ENCODE measurements at regions of chr18 and their contacts with region 1.

Region 1: DNA sequence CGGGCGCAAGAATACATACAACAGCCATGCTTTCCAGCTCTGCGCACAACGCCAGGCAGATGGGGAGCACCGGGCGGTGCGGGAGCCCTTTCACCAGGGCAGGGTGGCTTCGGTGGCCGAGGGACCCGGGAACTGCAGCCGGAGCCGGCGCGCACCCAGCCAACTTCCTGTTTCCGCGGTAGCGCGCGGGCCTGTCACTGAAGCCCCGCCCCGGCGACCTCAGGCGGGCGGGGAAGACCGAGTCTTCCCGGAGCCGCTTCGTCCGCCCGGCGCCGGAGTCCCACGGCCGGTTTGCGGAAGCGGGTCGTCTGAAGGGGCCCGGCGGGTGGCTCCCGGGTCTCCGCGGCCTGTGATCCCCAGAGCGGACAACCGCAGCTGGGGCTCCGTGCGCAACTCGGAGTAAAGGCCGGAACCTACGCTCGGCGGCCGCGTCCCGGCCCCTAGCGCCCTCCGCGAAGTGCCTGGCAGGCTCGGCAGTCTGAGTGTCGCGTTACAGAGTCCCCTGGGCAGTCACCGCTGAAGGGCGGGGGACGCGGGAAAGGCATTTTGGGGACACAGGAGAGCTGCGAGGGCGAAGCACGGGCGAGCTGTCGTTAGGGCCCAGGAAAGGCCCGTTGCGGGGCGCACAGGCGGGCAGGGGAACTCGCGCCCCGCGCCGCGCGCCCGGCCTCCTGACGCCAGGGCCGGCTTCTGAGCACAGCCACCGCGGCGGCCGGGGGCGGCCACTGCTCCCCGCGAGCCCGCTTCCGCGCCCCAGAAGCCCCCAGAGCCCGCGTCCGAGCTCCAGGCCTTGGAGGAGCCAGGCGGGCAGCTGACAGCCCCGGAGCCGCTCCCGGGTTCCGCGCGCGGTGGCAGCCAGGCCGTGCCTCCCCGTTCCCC is at the start of gene MPPE1:
- DNase-seq: peak; percentile 71 to 89
- H3K4me3 ChIP-seq: peak within 1 kb of the TSS; percentile 84
- H3K27ac ChIP-seq: peak within 1 kb of the TSS; percentile 72
- H3K4me1 ChIP-seq: peaks cover 15% of the 10 kb centered on the region
- H3K27me3 ChIP-seq: no peaks in the 10 kb centered on the region
- CTCF ChIP-seq: no peak
- total RNA-seq, gene MPPE1: 40.7 and 54.9 TPM in 2 replicates

Region 2: GRCh38 chr18:11857177-11857887 is 51.1 kb before region 1 on chr18:
- CTCF ChIA-PET with region 1: no interaction called
- POLR2A ChIA-PET with region 1: interaction called, 3 read pairs
- intact Hi-C with region 1: loop called (anchors 1 kb)
- DNase-seq: peak; percentile 87 to 97
- H3K4me3 ChIP-seq: peak overlapping the region; percentile 43; the same call in 1 of the 2 replicates
- H3K27ac ChIP-seq: peak overlapping the region; percentile 97
- H3K4me1 ChIP-seq: peaks cover 62% of the 10 kb centered on the region
- H3K27me3 ChIP-seq: no peaks in the 10 kb centered on the region
- CTCF ChIP-seq: no peak